ENCODE measurements at regions of chr5 and their contacts with region 1.

Region 1: DNA sequence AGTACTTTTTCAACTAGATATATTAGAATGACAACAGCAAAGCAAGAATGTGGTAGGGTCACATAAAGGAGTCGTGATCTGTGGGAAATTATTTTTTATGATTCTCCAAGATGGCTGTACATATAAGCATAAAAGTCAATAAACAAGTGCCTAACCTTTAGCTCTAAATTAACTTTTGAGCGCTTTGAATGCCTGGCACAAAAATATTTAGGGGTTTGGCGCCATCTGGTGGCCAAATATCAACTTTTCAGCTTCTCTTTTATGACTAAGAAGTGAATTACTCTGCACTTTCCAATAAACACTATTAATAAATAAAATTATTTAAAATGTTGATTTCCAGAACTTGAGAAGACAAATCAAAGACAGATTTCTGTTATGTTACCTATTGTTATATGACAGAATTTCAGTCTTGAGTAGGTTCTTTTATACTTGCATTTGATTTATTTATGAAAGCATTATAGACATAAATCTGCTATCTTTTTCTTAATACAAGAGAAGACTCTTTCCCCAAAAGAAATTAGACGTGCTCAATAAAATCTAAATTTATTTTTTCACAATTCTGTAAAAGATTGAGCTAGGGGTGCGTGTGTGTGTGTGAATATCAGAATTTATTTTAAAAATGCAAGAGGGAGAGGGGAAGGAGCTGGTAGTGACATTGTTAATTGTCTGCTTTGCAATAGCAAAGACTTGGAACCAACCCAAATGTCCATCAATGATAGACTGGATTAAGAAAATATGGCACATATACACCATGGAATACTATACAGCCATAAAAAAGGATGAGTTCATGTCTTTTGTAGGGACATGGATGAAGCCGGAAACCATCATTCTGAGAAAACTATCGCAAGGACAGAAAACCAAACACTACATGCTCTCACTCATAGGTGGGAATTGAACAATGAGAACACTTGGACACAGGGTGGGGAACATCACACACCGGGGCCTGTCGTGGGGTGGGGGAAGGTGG is 36.7 kb upstream of the ARRDC3 start:
- H3K4me3 ChIP-seq: no peak overlapping the region
- H3K27ac ChIP-seq: no peak overlapping the region
- H3K4me1 ChIP-seq: peaks cover 3% of the 10 kb centered on the region
- CTCF ChIP-seq: no peak

Region 2: GRCh38 chr5:90802474-90803317 is 617.2 kb before region 1 on chr5:
- CTCF ChIA-PET with region 1: interaction called, 43 read pairs
- POLR2A ChIA-PET with region 1: no interaction called
- H3K4me3 ChIP-seq: no peak overlapping the region
- H3K27ac ChIP-seq: no peak overlapping the region
- H3K4me1 ChIP-seq: no peaks in the 10 kb centered on the region
- CTCF ChIP-seq: no peak

Region 3: GRCh38 chr5:90866333-90866732 is 553.5 kb before region 1 on chr5:
- CTCF ChIA-PET with region 1: interaction called, 44 read pairs
- POLR2A ChIA-PET with region 1: no interaction called
- H3K4me3 ChIP-seq: no peak overlapping the region
- H3K27ac ChIP-seq: no peak overlapping the region
- H3K4me1 ChIP-seq: no peaks in the 10 kb centered on the region
- CTCF ChIP-seq: no peak; the same call in 1 of the 2 replicates

Region 4: DNA sequence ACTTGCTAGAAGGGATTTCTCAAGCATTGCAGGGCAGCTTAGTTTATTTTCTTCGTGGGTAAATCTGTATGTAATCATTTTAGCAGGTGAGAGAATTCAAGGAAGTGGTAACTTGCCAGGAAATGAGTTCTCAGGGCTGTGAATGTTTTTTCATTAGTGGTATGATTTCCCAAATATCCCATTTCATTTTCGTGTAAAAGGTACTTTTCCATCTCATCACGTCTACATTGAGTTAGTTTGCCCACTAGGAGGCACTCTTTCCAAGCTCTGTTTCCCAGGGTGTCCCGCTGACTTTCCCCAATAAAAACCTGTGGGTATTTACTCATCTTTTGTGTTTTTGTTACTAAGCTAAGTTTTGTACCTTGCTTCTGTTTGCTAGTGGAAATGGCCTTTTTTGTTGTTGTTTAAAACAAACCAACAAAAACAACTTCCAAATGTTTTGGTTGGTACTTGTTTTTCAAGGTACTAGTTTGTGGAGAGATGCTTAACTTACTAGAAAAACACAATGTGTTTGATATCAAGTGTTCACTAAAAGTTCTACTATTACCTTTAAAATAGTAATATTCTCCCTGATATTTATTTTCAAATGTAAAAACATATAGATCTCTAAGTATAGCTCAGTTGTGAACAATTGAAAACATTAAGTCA is 487.7 kb before region 1 on chr5:
- CTCF ChIA-PET with region 1: interaction called, 29 read pairs
- POLR2A ChIA-PET with region 1: no interaction called
- H3K4me3 ChIP-seq: no peak overlapping the region
- H3K27ac ChIP-seq: no peak overlapping the region
- H3K4me1 ChIP-seq: peaks cover 5% of the 10 kb centered on the region; the same call in 1 of the 2 replicates
- CTCF ChIP-seq: peak; percentile 72; the same call in 1 of the 2 replicates

Region 5: DNA sequence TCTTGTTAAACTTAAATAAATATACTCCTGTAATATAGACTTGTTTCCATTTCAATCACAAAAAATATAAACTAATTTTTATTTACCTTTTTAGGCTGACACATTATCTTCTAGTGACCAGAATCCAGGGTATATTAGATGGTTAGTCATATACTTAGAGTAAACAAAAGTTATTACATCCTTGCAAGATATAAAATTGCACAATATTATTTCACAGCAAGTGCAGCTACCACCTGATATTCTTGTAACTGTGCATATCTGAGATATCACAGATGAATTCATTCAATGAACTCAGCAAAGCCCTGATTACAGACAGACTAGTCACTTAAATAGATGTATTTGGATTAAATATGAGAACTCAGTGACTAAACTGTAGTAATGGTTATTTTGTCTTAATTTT is 11.1 kb before region 1 on chr5:
- CTCF ChIA-PET with region 1: interaction called, 16 read pairs
- POLR2A ChIA-PET with region 1: no interaction called
- H3K4me3 ChIP-seq: no peak overlapping the region
- H3K27ac ChIP-seq: no peak overlapping the region
- H3K4me1 ChIP-seq: no peaks in the 10 kb centered on the region
- CTCF ChIP-seq: no peak

Region 6: GRCh38 chr5:91434348-91434747 is 14.5 kb after region 1 on chr5:
- CTCF ChIA-PET with region 1: interaction called, 21 read pairs
- POLR2A ChIA-PET with region 1: no interaction called
- H3K4me3 ChIP-seq: no peak overlapping the region
- H3K27ac ChIP-seq: no peak overlapping the region
- H3K4me1 ChIP-seq: no peaks in the 10 kb centered on the region
- CTCF ChIP-seq: no peak

Region 7: GRCh38 chr5:91864962-91865361 is 445.1 kb after region 1 on chr5:
- CTCF ChIA-PET with region 1: no interaction called
- POLR2A ChIA-PET with region 1: no interaction called
- H3K4me3 ChIP-seq: no peak overlapping the region
- H3K27ac ChIP-seq: no peak overlapping the region
- H3K4me1 ChIP-seq: no peaks in the 10 kb centered on the region
- CTCF ChIP-seq: no peak